ENCODE measurements at regions of chr15 and their contacts with region 1.

Region 1: GRCh38 chr15:33194704-33195670 is at the start of gene FMN1:
- DNase-seq: peak; percentile 91
- H3K4me3 Mint-ChIP-seq: peak within 1 kb of the TSS; percentile 63
- H3K27ac Mint-ChIP-seq: no peak within 1 kb of the TSS
- H3K4me1 Mint-ChIP-seq: peaks cover 21% of the 10 kb centered on the region
- H3K27me3 Mint-ChIP-seq: peaks cover 17% of the 10 kb centered on the region
- total RNA-seq, gene FMN1: 0.02 to 0.12 TPM

Region 2: DNA sequence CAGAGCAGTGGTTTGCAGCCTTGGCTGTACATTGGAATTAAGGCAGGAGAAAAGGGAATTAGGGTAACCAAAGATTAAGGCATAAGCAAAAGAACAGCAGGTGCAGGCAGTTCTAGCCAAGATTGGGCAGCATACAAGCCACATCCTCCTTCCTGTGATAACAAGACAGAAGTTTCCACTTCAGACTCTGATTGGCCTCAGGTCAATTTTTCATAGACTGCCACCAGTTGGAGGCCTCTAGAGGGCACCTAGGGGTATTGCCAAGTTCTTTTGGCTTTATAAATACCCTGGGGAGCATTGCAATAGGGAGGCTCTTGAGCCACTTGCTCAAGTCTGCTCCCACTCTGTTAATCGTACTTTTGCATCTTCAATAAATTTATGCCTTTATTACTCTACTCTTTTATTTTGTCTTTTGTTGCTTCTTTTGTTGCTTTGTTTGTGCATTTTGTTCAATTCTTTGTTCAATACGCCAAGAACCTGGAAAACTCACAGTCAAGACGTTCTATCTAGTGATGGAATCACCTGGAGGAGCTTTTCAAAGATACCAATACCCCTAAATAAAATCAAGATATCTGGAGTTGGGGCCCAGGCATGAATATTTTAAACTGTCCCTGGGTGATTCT is 31.7 kb after region 1 on chr15:
- CTCF ChIA-PET with region 1: no interaction called
- intact Hi-C with region 1: loop called (anchors 5 kb)
- DNase-seq: peak; percentile 72
- H3K4me3 Mint-ChIP-seq: no peak overlapping the region
- H3K27ac Mint-ChIP-seq: no peak overlapping the region
- H3K4me1 Mint-ChIP-seq: peaks cover 12% of the 10 kb centered on the region
- H3K27me3 Mint-ChIP-seq: no peaks in the 10 kb centered on the region